Activated CD4-positive, alpha-beta T cell treated with anti-CD3 and anti-CD28 coated beads for 36 hours (primary cell): ENCODE measurements at regions of chr21 and their contacts with region 1.

Region 1: GRCh38 chr21:41283211-41283818 is 33.3 kb upstream of the FAM3B start:
- DNase-seq: peak; percentile 52
- ATAC-seq: peak; percentile 95
- H3K4me3 Mint-ChIP-seq: no peak overlapping the region
- H3K27ac Mint-ChIP-seq: no peak overlapping the region
- H3K4me1 Mint-ChIP-seq: no peaks in the 10 kb centered on the region
- H3K27me3 Mint-ChIP-seq: peaks cover 16% of the 10 kb centered on the region

Region 2: DNA sequence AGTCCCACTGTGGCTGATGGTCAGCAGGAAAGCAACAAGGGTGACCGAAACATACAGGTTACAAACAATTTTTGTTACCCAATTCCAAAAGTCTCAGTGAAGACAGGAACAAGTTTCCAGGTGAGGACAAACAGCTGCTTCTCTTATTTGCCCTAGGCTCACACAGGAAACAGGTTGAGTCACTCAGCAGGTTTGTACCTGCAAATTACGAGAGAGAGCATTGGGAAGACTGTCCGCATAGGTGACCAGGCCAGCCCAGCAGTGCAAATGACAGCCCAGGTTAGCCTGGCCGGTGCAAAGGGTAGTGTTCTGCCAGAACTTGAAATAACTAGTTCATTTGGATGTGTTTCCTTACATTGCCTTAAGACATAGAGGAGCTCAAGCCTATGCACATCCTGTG is 396.4 kb before region 1 on chr21:
- CTCF ChIA-PET with region 1: no interaction called
- POLR2A ChIA-PET with region 1: no interaction called
- intact Hi-C with region 1: no loop called
- DNase-seq: no peak
- ATAC-seq: no peak
- H3K4me3 Mint-ChIP-seq: no peak overlapping the region
- H3K27ac Mint-ChIP-seq: no peak overlapping the region
- H3K4me1 Mint-ChIP-seq: no peaks in the 10 kb centered on the region
- H3K27me3 Mint-ChIP-seq: peaks cover 3% of the 10 kb centered on the region

Region 3: DNA sequence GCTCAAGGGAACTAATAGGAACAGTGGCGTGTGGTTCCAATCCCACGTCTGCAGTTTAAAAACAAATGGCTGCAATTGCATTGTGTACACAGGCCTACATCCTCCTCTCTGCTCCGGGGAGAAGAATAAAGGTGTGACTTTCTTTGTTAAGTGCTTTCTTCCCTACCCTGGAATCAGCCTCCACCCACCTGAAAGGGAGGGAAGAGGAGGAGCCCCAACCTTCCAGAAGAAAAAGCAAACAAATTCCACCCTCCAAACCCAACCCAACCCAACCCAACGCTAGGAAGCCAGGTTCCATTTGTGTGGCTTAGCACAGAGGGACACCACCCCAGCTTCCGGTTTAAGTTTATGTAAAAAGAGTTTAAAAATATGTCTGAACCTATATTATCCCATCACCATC is 127.2 kb before region 1 on chr21:
- CTCF ChIA-PET with region 1: no interaction called
- POLR2A ChIA-PET with region 1: no interaction called
- intact Hi-C with region 1: no loop called
- DNase-seq: no peak
- ATAC-seq: no peak
- H3K4me3 Mint-ChIP-seq: no peak overlapping the region
- H3K27ac Mint-ChIP-seq: no peak overlapping the region
- H3K4me1 Mint-ChIP-seq: no peaks in the 10 kb centered on the region
- H3K27me3 Mint-ChIP-seq: peaks cover 18% of the 10 kb centered on the region

Region 4: GRCh38 chr21:41369105-41369919 is 86.0 kb after region 1 on chr21:
- CTCF ChIA-PET with region 1: interaction called, 15 read pairs
- POLR2A ChIA-PET with region 1: no interaction called
- intact Hi-C with region 1: loop called in 1 of 2 experiments (anchors 2 kb)
- DNase-seq: peak; percentile 67
- ATAC-seq: peak; percentile 77
- H3K4me3 Mint-ChIP-seq: peak overlapping the region; percentile 68
- H3K27ac Mint-ChIP-seq: peak overlapping the region; percentile 87
- H3K4me1 Mint-ChIP-seq: peaks cover 79% of the 10 kb centered on the region
- H3K27me3 Mint-ChIP-seq: no peaks in the 10 kb centered on the region

Region 5: DNA sequence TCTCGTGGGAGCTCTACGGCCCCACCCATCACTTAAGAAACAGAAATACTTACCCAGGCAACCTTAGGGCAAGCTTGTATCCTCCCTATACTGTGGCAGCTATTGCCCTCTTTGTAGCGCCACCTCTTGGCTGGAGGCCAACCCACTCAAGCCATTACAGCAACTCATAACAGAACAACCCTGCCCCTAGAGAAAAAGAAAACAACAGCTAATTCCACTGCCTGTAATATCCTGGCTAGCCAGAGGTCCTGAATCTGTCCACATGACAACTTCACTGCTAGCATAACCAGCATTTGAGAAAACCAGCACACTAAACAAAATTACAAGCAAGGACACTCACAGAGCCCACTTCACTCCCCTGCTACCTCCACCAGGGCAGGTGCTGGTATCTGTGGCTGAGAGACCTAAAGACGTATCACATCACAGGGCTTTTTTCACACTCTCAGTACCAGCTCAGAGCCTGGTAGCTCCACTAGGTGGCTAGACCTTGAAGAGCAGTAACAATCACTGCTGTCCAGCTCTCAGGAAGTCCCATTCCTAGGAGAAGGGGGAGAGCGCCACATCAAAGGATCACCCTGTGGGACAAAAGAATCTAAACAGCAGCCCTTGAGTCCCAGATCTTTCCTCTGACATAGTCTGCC is 128.3 kb after region 1 on chr21:
- CTCF ChIA-PET with region 1: interaction called, 11 read pairs
- POLR2A ChIA-PET with region 1: no interaction called
- intact Hi-C with region 1: no loop called
- DNase-seq: peak; percentile 55
- ATAC-seq: peak; percentile 60
- H3K4me3 Mint-ChIP-seq: no peak overlapping the region
- H3K27ac Mint-ChIP-seq: no peak overlapping the region
- H3K4me1 Mint-ChIP-seq: peaks cover 2% of the 10 kb centered on the region
- H3K27me3 Mint-ChIP-seq: no peaks in the 10 kb centered on the region

Region 6: GRCh38 chr21:41460578-41461527 is 177.5 kb after region 1 on chr21:
- CTCF ChIA-PET with region 1: interaction called, 56 read pairs
- POLR2A ChIA-PET with region 1: no interaction called
- intact Hi-C with region 1: loop called (anchors 1 kb)
- DNase-seq: peak; percentile 77
- ATAC-seq: peak; percentile 79
- H3K4me3 Mint-ChIP-seq: no peak overlapping the region
- H3K27ac Mint-ChIP-seq: no peak overlapping the region
- H3K4me1 Mint-ChIP-seq: peaks cover 2% of the 10 kb centered on the region
- H3K27me3 Mint-ChIP-seq: no peaks in the 10 kb centered on the region

Region 7: GRCh38 chr21:41482301-41482700 is 199.0 kb after region 1 on chr21:
- CTCF ChIA-PET with region 1: interaction called, 10 read pairs
- POLR2A ChIA-PET with region 1: no interaction called
- intact Hi-C with region 1: no loop called
- DNase-seq: no peak
- ATAC-seq: no peak
- H3K4me3 Mint-ChIP-seq: no peak overlapping the region
- H3K27ac Mint-ChIP-seq: no peak overlapping the region
- H3K4me1 Mint-ChIP-seq: peaks cover 3% of the 10 kb centered on the region
- H3K27me3 Mint-ChIP-seq: peaks cover 1% of the 10 kb centered on the region

Region 8: GRCh38 chr21:41777951-41778874 is 494.9 kb after region 1 on chr21:
- CTCF ChIA-PET with region 1: interaction called, 5 read pairs
- POLR2A ChIA-PET with region 1: no interaction called
- intact Hi-C with region 1: loop called in 1 of 2 experiments (anchors 10 kb)
- DNase-seq: peak; percentile 63
- ATAC-seq: no peak
- H3K4me3 Mint-ChIP-seq: no peak overlapping the region
- H3K27ac Mint-ChIP-seq: no peak overlapping the region
- H3K4me1 Mint-ChIP-seq: peaks cover 6% of the 10 kb centered on the region
- H3K27me3 Mint-ChIP-seq: peaks cover 55% of the 10 kb centered on the region